Uterus (tissue), 4 donors: ENCODE measurements at regions of chr16 and their contacts with region 1.

Region 1: DNA sequence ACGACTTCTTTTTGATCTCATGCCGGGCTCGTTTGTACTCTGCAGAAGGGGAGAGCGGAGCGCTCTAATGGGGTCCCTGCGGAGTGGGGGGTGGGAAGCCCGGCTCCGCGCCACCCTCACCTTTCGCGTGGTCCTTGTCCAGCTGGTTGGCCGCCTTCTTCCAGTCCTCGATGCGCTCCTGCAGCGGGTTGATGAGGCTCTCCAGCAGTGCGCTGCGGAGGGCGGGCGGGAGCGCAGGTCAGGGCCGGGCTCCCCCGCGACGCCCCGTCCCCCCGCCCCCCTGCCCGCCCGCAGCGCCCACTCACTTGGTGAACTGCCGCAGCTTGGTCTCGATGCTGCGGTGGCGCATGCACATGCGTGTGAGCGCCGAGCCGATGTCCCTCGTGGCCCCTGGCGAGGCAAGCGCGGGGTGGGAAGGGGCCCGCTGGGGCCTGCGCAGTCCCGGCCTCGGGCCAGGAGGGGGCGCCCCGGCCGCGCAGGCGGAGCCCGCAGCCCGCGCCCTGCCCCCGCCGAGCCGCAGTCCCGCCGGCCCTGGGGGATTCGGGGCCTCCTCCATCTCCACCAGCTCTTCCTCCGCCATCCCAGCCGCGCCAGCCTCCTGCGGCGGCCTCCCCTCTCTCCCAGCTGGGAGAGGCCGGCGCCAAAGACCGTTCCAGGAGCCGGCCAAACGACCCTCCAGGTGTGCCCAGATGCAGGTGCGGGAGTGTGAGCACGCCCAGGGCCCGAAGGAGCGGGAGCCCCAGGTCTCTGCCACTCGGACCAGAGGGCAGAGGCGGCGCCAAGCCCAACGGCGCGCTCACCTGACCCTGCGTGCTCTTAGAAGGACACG is 6.0 kb downstream of the MTSS2 start:
- DNase-seq: peak in 1 of 2 donors; percentile 53
- H3K4me3 ChIP-seq: no peak overlapping the region
- H3K27ac ChIP-seq: peak overlapping the region; percentile 85 to 97
- H3K4me1 ChIP-seq: peaks cover 21 to 37% of the 10 kb centered on the region in 2 donors
- H3K27me3 ChIP-seq: no peaks in the 10 kb centered on the region
- CTCF ChIP-seq: peak; percentile 49 to 94 (median 86)
- POLR2A ChIP-seq: no peak

Region 2: DNA sequence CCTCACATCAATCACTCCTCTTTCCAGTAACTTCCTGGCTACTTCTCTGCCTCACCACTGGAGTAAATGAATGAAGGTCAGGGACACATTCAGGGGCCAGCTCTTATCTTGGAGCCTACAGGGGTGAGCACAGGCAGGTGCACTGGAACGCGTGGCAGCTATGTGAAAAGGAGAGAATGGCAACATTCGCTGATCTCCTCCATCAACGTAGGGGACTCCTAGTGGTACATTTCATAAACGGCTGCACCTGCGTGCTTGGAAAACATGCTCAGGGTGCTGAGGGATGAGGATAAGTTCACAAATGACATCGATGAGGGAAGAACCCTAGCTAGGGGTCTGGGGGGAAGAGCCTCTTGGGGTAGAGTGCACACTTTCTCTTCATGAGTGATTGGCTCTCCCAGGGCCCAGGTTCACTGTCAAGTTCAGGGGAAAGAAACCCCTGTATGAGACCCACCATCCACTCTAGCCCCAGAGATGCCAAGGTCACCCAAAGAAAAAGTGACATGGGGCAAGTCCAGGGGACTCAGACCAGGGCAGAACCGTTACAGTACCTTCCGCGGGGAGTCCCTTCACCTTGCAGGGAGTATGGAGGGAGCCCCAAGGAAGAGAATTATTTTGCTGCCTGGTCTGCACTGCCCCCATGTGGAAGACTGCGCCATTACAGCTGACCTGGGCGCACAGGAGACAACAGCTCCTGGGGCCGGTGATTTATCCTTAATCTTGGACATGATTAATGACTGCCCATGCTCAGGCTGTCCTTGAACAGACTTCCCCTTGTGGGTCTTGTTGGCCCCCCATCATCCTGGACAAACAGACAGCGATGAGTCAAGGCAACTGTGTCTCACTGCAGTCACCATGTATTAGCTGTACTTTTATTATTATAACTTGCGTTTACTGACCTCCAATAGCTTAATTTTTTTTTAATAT is 91.0 kb after region 1 on chr16:
- intact Hi-C with region 1: loop called (anchors 2 kb)
- DNase-seq: peak; percentile 67 to 79
- H3K4me3 ChIP-seq: no peak overlapping the region
- H3K27ac ChIP-seq: no peak overlapping the region
- H3K4me1 ChIP-seq: no peaks in the 10 kb centered on the region
- H3K27me3 ChIP-seq: no peaks in the 10 kb centered on the region
- CTCF ChIP-seq: peak; percentile 92 to 97 (median 94)
- POLR2A ChIP-seq: no peak